ENCODE measurements at regions of chr5 and their contacts with region 1.

Region 1: DNA sequence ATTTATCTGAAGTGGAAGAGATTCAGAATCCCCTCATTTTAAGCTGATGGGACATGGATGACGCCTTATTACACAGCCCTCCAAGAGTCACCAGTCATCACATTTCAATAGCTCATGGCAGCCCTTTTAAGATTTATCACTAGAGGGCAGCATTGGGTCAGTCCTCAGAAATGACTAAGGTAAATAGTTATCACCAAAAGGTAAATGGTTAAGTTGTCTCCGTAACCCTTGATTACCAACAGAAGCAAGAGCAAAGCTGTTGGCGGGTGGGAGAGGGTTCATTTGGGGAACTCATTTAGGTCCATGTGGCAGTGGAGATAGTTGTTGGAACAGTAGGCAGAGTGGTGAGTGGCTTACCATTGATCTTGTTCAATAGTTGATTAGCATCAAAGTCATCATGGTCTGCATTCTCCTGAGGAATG is 12.0 kb upstream of the C9 start:
- DNase-seq: peak; percentile 47
- H3K4me3 ChIP-seq: no peak overlapping the region
- H3K27ac ChIP-seq: no peak overlapping the region
- H3K27me3 ChIP-seq: no peaks in the 10 kb centered on the region
- CTCF ChIP-seq: peak; percentile 72

Region 2: GRCh38 chr5:39547553-39548154 is 171.3 kb after region 1 on chr5:
- in situ Hi-C with region 1: loop called (anchors 25 kb)
- DNase-seq: peak; percentile 60
- H3K4me3 ChIP-seq: no peak overlapping the region
- H3K27ac ChIP-seq: no peak overlapping the region
- H3K27me3 ChIP-seq: no peaks in the 10 kb centered on the region
- CTCF ChIP-seq: peak; percentile 63